Naive thymus-derived CD4-positive, alpha-beta T cell (primary cell): ENCODE measurements at regions of chr10 and their contacts with region 1.

Region 1: GRCh38 chr10:72088889-72089575 is 681 bp upstream of the SPOCK2 start:
- DNase-seq: peak in 5 of 9 donors; percentile 37 to 79 (median 78)
- ATAC-seq: peak; percentile 54
- H3K4me3 ChIP-seq: peak overlapping the region; percentile 98
- H3K4me3 Mint-ChIP-seq: peak overlapping the region; percentile 88 to 100 (median 98)
- H3K27ac ChIP-seq: peak overlapping the region; percentile 99
- H3K27ac Mint-ChIP-seq: peak overlapping the region; percentile 96 to 100 (median 99)
- H3K4me1 ChIP-seq: peaks cover 39 to 49% of the 10 kb centered on the region in 2 donors
- H3K4me1 Mint-ChIP-seq: peaks cover 24 to 60% (median 50%) of the 10 kb centered on the region in 7 donors
- H3K27me3 ChIP-seq: no peaks in the 10 kb centered on the region
- H3K27me3 Mint-ChIP-seq: no peaks in the 10 kb centered on the region

Region 2: DNA sequence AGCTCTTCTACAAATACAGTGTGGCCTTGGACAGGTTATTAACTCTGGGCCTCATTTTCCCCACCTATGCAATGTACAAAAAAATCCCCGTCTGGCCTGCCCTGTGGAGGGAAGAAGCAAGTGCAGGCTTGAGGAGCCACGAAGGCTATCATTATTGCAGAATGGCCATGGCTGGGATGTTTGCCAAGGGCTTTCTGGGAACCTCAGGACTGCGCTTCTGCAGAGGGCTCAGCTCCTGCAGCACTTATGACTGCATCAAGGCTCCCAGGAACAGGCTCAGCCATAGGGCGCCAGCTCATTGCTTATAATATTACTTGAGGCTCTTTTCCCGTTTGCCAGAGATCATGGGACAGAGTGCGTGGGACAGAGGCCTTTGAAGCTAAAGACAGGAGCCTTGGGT is 349.0 kb before region 1 on chr10:
- CTCF ChIA-PET with region 1: no interaction called
- POLR2A ChIA-PET with region 1: no interaction called
- intact Hi-C with region 1: loop called in 1 of 2 experiments (anchors 10 kb)
- DNase-seq: no peak
- ATAC-seq: no peak
- H3K4me3 ChIP-seq: peak overlapping the region; percentile 55
- H3K4me3 Mint-ChIP-seq: peak overlapping the region; percentile 12 to 90 (median 72)
- H3K27ac ChIP-seq: peak overlapping the region; percentile 74
- H3K27ac Mint-ChIP-seq: peak overlapping the region; percentile 81 to 99 (median 96)
- H3K4me1 ChIP-seq: peaks cover 85 to 97% of the 10 kb centered on the region in 2 donors
- H3K4me1 Mint-ChIP-seq: peaks cover 73 to 100% (median 95%) of the 10 kb centered on the region in 7 donors
- H3K27me3 ChIP-seq: no peaks in the 10 kb centered on the region
- H3K27me3 Mint-ChIP-seq: no peaks in the 10 kb centered on the region

Region 3: GRCh38 chr10:72069751-72070526 is 19.1 kb before region 1 on chr10:
- CTCF ChIA-PET with region 1: no interaction called
- POLR2A ChIA-PET with region 1: interaction called, 21 read pairs
- intact Hi-C with region 1: loop called in 1 of 2 experiments (anchors 2 kb)
- DNase-seq: no peak
- ATAC-seq: no peak
- H3K4me3 ChIP-seq: no peak overlapping the region
- H3K4me3 Mint-ChIP-seq: peak overlapping the region in 5 of 10 donors; percentile 32 to 67 (median 35)
- H3K27ac ChIP-seq: peak overlapping the region; percentile 39
- H3K27ac Mint-ChIP-seq: peak overlapping the region; percentile 5 to 95 (median 82)
- H3K4me1 ChIP-seq: peaks cover 16 to 21% of the 10 kb centered on the region in 2 donors
- H3K4me1 Mint-ChIP-seq: peaks cover 20 to 57% (median 43%) of the 10 kb centered on the region in 7 donors
- H3K27me3 ChIP-seq: no peaks in the 10 kb centered on the region
- H3K27me3 Mint-ChIP-seq: no peaks in the 10 kb centered on the region

Region 4: GRCh38 chr10:72126184-72126871 is 37.3 kb after region 1 on chr10:
- CTCF ChIA-PET with region 1: interaction called, 11 read pairs
- POLR2A ChIA-PET with region 1: interaction called, 77 read pairs
- intact Hi-C with region 1: loop called in 1 of 2 experiments (anchors 2 kb)
- DNase-seq: peak in 1 of 9 donors; percentile 16
- ATAC-seq: no peak
- H3K4me3 ChIP-seq: no peak overlapping the region
- H3K4me3 Mint-ChIP-seq: no peak overlapping the region
- H3K27ac ChIP-seq: no peak overlapping the region
- H3K27ac Mint-ChIP-seq: peak overlapping the region in 4 of 9 donors; percentile 5 to 63 (median 18)
- H3K4me1 ChIP-seq: peaks cover 5 to 10% of the 10 kb centered on the region in 2 donors
- H3K4me1 Mint-ChIP-seq: peaks cover 18 to 54% (median 42%) of the 10 kb centered on the region in 7 donors
- H3K27me3 ChIP-seq: no peaks in the 10 kb centered on the region
- H3K27me3 Mint-ChIP-seq: no peaks in the 10 kb centered on the region

Region 5: DNA sequence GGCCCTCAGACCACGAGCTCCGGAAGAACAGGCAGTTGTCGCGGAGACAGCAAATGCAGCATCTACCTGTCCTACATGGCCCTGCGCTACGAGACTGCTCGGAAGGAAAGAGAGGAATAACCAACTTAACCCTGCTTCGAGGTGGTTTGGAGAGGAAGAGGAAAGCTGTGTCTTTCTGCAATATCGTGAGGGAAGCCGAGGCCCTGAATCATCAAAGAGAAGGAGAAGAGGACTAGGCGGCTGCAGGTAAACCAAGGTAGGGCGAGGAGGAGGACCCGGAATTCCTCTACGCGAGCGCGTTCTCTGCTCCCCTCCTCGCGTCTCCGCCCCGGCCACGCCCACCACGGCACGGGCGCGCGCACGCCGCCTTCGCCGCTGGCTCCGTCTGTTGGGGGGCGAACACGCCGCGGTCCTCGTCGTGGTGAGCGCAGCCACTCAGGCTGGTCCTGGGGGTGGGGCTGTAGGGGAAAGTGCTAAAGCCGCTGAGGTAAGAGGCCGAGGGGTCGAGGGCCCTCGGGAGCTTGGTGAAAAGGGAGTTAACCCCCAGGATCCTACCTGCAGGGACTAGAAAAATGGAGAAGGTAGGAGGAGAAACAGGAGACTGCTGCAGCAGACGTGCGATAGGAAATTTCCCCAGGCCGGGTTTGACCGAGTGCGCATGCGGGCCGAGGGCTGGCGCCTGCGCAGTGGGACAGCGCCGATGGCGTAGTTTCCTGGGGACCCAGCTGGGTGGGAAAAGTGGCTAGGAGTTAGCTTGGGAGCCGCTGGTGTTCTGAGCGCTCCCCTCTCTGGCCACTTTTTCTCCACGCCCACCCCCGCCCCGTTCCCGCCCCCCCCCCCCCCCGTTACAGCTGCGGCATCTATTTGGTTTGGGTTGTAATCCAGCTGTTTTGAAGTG is 126.9 kb after region 1 on chr10 and contains the starts of genes ANAPC16 and ASCC1:
- CTCF ChIA-PET with region 1: interaction called, 3 read pairs
- POLR2A ChIA-PET with region 1: interaction called, 66 read pairs
- intact Hi-C with region 1: loop called (anchors 1 kb)
- DNase-seq: peak; percentile 90 to 99 (median 97)
- ATAC-seq: peak; percentile 95
- H3K4me3 ChIP-seq: peak within 1 kb of the TSS; percentile 66
- H3K4me3 Mint-ChIP-seq: peak within 1 kb of the TSS; percentile 84 to 100 (median 97)
- H3K27ac ChIP-seq: peak within 1 kb of the TSS; percentile 95
- H3K27ac Mint-ChIP-seq: peak within 1 kb of the TSS; percentile 93 to 100 (median 99)
- H3K4me1 ChIP-seq: peaks cover 22 to 49% of the 10 kb centered on the region in 2 donors
- H3K4me1 Mint-ChIP-seq: peaks cover 14 to 62% (median 47%) of the 10 kb centered on the region in 7 donors
- H3K27me3 ChIP-seq: no peaks in the 10 kb centered on the region
- H3K27me3 Mint-ChIP-seq: no peaks in the 10 kb centered on the region
- total RNA-seq, gene ANAPC16: 85.5 to 131 (median 105) TPM
- total RNA-seq, gene ASCC1: 19.4 to 33.1 (median 24.2) TPM

Region 6: GRCh38 chr10:72260588-72261322 is 171.7 kb after region 1 on chr10:
- CTCF ChIA-PET with region 1: interaction called, 3 read pairs
- POLR2A ChIA-PET with region 1: interaction called, 4 read pairs
- intact Hi-C with region 1: loop called in 1 of 2 experiments (anchors 5 kb)
- DNase-seq: peak; percentile 55 to 89 (median 63)
- ATAC-seq: peak; percentile 85
- H3K4me3 ChIP-seq: peak overlapping the region; percentile 68
- H3K4me3 Mint-ChIP-seq: peak overlapping the region; percentile 83 to 93 (median 90)
- H3K27ac ChIP-seq: peak overlapping the region; percentile 78
- H3K27ac Mint-ChIP-seq: peak overlapping the region; percentile 87 to 97 (median 94)
- H3K4me1 ChIP-seq: peaks cover 45 to 63% of the 10 kb centered on the region in 2 donors
- H3K4me1 Mint-ChIP-seq: peaks cover 32 to 83% (median 67%) of the 10 kb centered on the region in 7 donors
- H3K27me3 ChIP-seq: no peaks in the 10 kb centered on the region
- H3K27me3 Mint-ChIP-seq: no peaks in the 10 kb centered on the region

Region 7: DNA sequence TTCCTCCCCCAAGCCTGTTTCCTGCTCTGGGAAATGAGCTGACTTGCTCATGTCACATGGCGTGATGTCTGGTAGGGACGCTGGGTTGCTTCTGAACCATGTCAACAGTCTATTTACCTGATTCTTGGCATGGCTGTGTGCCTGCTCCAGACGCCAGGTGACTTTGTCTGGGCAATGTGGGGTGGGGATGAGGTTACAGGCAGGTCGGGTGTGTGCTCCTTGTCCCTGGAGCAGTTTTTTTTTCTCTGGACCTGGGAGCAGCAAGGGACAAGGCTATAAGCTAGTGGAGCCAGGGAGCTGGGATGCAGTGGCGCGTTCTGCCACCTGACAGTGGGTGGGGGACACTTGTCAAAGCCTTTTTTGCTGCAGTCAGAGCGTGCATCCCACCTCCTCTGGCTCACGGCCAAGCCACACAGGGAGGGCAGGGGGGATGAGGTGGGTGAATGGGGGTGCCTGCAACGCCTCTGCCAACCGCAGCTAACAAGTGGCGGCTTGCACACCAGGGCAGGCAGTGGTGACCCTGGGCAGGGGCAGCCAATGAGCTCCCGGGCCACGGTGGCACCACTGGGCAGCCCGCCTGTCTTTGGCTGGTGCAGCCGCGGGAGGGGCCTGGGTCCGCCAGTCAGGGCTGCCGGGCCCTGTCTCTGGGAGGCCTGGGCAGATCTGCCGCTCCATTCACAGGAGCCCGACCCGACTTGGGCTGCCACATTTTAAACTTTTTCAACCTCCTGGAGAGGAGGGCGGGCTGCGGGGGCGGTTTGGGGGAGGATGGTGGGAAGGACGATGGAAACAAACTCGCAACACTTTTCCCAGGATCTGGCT is 242.8 kb after region 1 on chr10:
- CTCF ChIA-PET with region 1: no interaction called
- POLR2A ChIA-PET with region 1: interaction called, 11 read pairs
- intact Hi-C with region 1: loop called in 1 of 2 experiments (anchors 1 kb)
- DNase-seq: peak; percentile 77 to 94 (median 91)
- ATAC-seq: peak; percentile 84
- H3K4me3 ChIP-seq: peak overlapping the region; percentile 61
- H3K4me3 Mint-ChIP-seq: peak overlapping the region; percentile 76 to 93 (median 84)
- H3K27ac ChIP-seq: peak overlapping the region; percentile 79
- H3K27ac Mint-ChIP-seq: peak overlapping the region; percentile 94 to 99 (median 98)
- H3K4me1 ChIP-seq: peaks cover 84 to 94% of the 10 kb centered on the region in 2 donors
- H3K4me1 Mint-ChIP-seq: peaks cover 52 to 95% (median 90%) of the 10 kb centered on the region in 7 donors
- H3K27me3 ChIP-seq: no peaks in the 10 kb centered on the region
- H3K27me3 Mint-ChIP-seq: no peaks in the 10 kb centered on the region